BJ (cell line): ENCODE measurements at regions of chr4 and their contacts with region 1.

Region 1: DNA sequence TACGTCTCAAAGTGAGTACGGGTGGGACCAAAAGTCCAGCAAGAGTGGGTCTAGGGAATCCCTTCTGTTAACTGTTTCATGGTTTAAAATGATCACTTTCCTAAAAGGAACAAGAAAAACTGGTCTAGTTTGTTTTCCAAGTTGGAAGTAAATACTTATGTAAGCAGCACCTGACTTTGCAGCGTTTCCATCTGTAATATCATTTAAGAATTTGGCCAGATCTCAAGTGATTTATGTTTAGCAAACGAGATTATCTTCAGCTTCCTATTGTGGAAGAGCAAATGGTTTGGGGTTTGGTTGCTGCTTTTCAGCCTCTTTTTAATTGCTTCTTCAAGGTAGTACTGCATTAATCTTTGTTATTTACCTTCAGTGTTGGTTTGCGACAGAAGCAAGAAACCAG is 50.4 kb downstream of the FHIP1A start:
- DNase-seq: no peak
- H3K4me3 ChIP-seq: no peak overlapping the region
- H3K27me3 ChIP-seq: no peaks in the 10 kb centered on the region
- CTCF ChIP-seq: no peak

Region 2: GRCh38 chr4:150906987-150907633 is 552.3 kb before region 1 on chr4:
- CTCF ChIA-PET with region 1: no interaction called
- POLR2A ChIA-PET with region 1: no interaction called
- DNase-seq: no peak
- H3K4me3 ChIP-seq: no peak overlapping the region
- H3K27me3 ChIP-seq: no peaks in the 10 kb centered on the region
- CTCF ChIP-seq: no peak

Region 3: DNA sequence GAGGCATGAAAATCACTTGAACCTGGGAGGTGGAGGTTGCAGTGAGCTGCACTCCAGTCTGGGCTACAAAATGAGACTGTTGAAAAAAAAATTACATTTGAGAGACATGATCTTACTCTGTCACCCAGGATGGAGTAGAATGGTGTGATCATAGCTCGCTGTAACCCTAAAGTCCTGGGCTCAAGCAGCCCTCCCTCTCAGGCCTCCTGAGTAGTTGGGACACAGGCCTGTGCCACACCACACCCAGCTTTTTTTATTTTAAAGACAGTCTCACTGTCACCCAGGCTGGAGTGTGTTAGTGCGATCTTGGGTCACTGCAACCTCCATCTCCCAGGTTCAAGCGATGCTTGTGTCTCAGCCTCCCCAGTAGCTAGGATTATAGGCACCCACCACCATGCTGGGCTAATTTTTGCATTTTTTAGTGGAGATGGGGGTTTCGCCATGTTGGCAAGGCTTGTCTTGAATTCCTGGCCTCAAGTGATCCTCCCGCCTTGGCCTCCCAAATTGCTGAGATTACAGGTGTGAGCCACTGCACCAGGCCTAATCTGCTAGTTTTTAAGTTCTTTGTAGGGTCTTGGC is 353.8 kb before region 1 on chr4:
- CTCF ChIA-PET with region 1: no interaction called
- POLR2A ChIA-PET with region 1: no interaction called
- DNase-seq: no peak
- H3K4me3 ChIP-seq: no peak overlapping the region
- H3K27me3 ChIP-seq: no peaks in the 10 kb centered on the region
- CTCF ChIP-seq: no peak

Region 4: GRCh38 chr4:151443247-151443646 is 16.1 kb before region 1 on chr4:
- CTCF ChIA-PET with region 1: interaction called, 3 read pairs
- POLR2A ChIA-PET with region 1: interaction called, 10 read pairs
- DNase-seq: no peak
- H3K4me3 ChIP-seq: no peak overlapping the region
- H3K27me3 ChIP-seq: peaks cover 2% of the 10 kb centered on the region; the same call in 1 of the 2 replicates
- CTCF ChIP-seq: no peak

Region 5: DNA sequence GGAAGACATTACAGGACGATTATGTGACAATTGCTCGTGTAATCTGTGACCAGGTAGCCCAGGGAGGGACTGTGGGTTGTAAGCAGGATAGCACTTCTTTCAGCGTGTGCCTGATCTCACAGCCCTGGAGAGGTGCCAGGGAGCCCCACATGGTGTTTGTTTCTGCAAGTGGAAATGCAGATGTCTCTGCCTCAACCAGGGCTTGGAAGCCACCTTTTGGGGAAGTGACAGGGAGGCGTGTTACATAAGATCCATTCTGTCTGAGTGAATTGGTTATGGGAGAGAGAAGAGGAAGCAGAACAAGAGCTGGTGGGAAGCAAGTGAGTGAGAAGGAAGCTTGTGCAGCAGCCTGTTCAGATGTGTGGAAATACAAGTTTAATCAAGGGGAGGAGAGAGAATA is 405.9 kb after region 1 on chr4:
- CTCF ChIA-PET with region 1: no interaction called
- POLR2A ChIA-PET with region 1: no interaction called
- DNase-seq: no peak
- H3K4me3 ChIP-seq: no peak overlapping the region
- H3K27me3 ChIP-seq: peaks cover 5% of the 10 kb centered on the region; the same call in 1 of the 2 replicates
- CTCF ChIP-seq: no peak